PC-9 (cell line): ENCODE measurements at regions of chr7 and their contacts with region 1.

Region 1: DNA sequence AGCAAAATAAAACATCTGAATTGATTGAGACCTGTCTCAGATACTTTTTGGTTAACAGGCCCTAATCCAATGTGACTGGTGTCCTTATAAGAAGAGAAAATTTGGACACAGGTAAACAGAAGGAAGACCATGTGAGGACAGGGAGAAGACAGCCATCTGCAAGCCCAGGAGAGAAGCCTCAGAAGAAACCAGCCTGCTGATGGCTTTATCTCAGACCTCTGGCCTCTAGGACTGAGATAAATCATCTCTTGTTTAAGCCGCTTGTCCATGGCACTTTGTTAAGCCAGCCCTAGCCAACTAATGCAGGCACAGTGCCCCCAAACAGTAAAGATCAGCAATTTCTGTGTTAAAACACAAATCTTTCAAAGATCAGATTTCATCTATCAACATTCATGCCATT is 41.8 kb upstream of the FIGNL1 start:
- DNase-seq: no peak
- H3K4me3 ChIP-seq: no peak overlapping the region
- H3K27ac ChIP-seq: no peak overlapping the region
- H3K4me1 ChIP-seq: 0 out of 2 replicates have a peak, but pooled peaks cover 4% of the 10 kb centered on the region
- H3K27me3 ChIP-seq: no peaks in the 10 kb centered on the region
- CTCF ChIP-seq: no peak

Region 2: GRCh38 chr7:50467817-50468610 is 23.9 kb before region 1 on chr7:
- CTCF ChIA-PET with region 1: no interaction called
- POLR2A ChIA-PET with region 1: no interaction called
- intact Hi-C with region 1: no loop called
- DNase-seq: peak; percentile 55 to 86
- H3K4me3 ChIP-seq: peak overlapping the region; percentile 38; the same call in 1 of the 2 replicates
- H3K27ac ChIP-seq: no peak overlapping the region
- H3K4me1 ChIP-seq: peaks cover 4% of the 10 kb centered on the region
- H3K27me3 ChIP-seq: no peaks in the 10 kb centered on the region
- CTCF ChIP-seq: peak; percentile 99

Region 3: DNA sequence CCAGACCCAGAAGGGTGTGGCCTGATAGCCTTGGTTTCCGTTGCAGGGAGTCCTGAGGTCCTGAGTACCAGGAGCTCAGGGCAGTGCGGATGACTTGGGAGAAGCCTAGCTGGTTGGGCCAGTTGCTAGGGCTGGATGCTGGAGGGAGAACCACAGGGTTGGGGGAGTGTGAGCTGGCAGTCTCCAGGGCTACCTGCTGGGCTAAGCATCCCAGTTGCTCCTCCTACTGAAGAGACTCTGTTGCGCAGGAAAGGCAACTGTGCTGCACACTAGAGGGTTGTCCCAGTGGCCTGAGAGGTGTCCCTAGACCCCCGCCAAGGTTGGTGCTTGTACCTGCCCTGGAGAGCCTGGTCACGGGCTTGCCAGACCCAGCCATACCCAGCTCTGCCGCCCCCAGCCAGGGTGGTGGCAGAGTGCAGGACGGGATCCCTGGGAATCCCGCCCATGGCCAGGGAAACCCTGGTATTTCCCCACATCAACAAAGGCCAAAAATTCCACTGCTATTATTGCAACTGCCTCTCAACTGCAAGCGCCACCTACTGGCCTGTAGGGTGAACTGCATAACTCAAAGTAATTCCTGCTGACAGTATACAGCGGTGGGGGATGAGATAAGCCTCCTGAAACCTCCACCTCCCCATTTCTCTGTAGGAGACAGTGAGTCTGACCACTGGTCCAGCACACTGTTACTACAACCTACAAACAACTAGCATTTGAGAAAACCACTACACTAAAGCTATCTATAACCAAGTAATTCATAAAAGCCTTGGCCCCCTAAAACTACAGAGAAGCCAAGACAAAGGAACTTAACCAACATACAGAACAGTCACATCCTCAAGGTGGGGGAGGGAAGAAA is 140.8 kb after region 1 on chr7:
- CTCF ChIA-PET with region 1: interaction called, 11 read pairs
- POLR2A ChIA-PET with region 1: no interaction called
- intact Hi-C with region 1: no loop called
- DNase-seq: peak in 1 of 2 experiments; percentile 48
- H3K4me3 ChIP-seq: no peak overlapping the region
- H3K27ac ChIP-seq: no peak overlapping the region
- H3K4me1 ChIP-seq: no peaks in the 10 kb centered on the region
- H3K27me3 ChIP-seq: no peaks in the 10 kb centered on the region
- CTCF ChIP-seq: peak; percentile 99